HepG2 (cell line): ENCODE measurements at regions of chr6 and their contacts with region 1.

Region 1: GRCh38 chr6:160137989-160138835 is 16.6 kb downstream of the SLC22A1 start:
- DNase-seq: peak; percentile 57
- ATAC-seq: peak; percentile 9
- H3K4me3 ChIP-seq: peak overlapping the region in 1 of 3 experiments; percentile 40; a peak in 1 of 6 replicates
- H3K27ac ChIP-seq: peak overlapping the region; percentile 60
- H3K4me1 ChIP-seq: peaks cover 66% of the 10 kb centered on the region
- H3K27me3 ChIP-seq: no peaks in the 10 kb centered on the region
- CTCF ChIP-seq: peak; percentile 82
- EP300 ChIP-seq: no peak
- POLR2A ChIP-seq: no peak
- RAD21 ChIP-seq: peak; percentile 68

Region 2: DNA sequence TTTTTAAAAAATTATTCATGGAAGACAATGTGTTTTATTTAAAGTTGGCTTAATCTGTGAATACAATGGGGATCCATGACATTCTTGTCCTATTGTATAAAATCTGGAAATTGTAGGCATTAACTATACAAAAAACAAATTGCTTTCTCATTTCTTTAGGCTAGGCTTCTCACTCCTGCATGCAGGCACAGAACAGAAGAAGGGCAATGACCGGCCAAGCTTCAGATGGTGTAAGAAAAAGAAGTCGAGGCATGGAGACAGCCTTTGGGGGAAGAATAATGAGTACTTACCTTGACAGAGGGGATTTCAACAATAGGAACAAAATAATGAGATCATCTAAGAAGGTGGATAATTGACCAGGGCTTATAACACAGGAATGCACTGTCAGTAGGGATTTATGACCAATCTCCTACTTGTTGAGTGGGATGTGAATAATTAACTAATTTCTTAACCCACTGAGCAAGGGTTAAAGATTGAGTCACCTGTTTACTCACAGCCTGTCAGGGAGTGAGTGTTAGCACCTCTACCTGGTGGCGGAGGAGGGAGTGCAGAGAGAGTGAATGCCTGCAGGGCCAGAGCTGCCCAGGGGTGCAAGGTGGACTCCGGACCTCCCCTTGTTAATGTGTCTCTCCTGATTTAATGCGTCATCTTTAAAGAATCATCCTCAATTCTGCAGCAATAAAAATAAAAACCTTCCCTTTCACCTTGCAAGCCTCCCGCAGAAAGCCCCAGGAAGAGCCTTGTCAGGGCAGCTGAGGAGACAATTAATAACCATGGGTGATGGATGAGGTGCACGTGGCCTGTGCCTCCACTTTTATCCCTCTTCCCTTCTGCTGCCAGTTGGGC is 116.5 kb after region 1 on chr6:
- CTCF ChIA-PET with region 1: interaction called, 3 read pairs
- POLR2A ChIA-PET with region 1: no interaction called
- in situ Hi-C with region 1: no loop called
- intact Hi-C with region 1: loop called (anchors 10 kb)
- DNase-seq: peak; percentile 81
- ATAC-seq: peak; percentile 99
- H3K4me3 ChIP-seq: no peak overlapping the region
- H3K27ac ChIP-seq: peak overlapping the region; percentile 7
- H3K4me1 ChIP-seq: peaks cover 18% of the 10 kb centered on the region
- H3K27me3 ChIP-seq: peaks cover 0 to 12% of the 10 kb centered on the region in 2 experiments; a peak in 1 of 5 replicates
- CTCF ChIP-seq: peak; percentile 62
- EP300 ChIP-seq: peak in 1 of 2 experiments; percentile 61; a peak in 2 of 4 replicates
- POLR2A ChIP-seq: no peak
- RAD21 ChIP-seq: peak; percentile 36; the same call in 1 of the 2 replicates

Region 3: DNA sequence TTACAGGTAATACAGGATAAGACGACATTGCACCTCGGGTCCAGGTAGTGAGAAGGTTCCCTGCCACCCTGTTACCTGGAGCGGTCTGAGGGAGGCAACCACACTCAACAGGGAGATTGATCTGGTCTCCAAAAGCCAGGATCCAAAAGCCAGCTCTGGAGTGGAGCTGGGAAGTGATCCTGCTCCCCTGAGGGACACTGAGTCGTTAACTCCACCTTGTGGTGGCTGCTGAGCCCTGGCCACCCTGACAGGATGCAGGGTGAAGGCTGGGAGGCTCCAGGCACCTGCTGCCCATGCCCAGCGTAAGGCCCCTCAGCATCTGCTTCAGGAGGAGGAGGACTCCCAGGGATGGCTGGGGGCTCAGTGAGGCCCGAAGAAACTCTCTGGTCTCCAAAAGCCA is 159.1 kb after region 1 on chr6:
- CTCF ChIA-PET with region 1: no interaction called
- POLR2A ChIA-PET with region 1: no interaction called
- in situ Hi-C with region 1: no loop called
- intact Hi-C with region 1: loop called (anchors 1 kb)
- DNase-seq: peak; percentile 14
- ATAC-seq: peak; percentile 92
- H3K4me3 ChIP-seq: no peak overlapping the region
- H3K27ac ChIP-seq: no peak overlapping the region
- H3K4me1 ChIP-seq: peaks cover 14% of the 10 kb centered on the region
- H3K27me3 ChIP-seq: no peaks in the 10 kb centered on the region
- CTCF ChIP-seq: peak; percentile 77
- EP300 ChIP-seq: no peak
- POLR2A ChIP-seq: no peak
- RAD21 ChIP-seq: peak; percentile 37

Region 4: DNA sequence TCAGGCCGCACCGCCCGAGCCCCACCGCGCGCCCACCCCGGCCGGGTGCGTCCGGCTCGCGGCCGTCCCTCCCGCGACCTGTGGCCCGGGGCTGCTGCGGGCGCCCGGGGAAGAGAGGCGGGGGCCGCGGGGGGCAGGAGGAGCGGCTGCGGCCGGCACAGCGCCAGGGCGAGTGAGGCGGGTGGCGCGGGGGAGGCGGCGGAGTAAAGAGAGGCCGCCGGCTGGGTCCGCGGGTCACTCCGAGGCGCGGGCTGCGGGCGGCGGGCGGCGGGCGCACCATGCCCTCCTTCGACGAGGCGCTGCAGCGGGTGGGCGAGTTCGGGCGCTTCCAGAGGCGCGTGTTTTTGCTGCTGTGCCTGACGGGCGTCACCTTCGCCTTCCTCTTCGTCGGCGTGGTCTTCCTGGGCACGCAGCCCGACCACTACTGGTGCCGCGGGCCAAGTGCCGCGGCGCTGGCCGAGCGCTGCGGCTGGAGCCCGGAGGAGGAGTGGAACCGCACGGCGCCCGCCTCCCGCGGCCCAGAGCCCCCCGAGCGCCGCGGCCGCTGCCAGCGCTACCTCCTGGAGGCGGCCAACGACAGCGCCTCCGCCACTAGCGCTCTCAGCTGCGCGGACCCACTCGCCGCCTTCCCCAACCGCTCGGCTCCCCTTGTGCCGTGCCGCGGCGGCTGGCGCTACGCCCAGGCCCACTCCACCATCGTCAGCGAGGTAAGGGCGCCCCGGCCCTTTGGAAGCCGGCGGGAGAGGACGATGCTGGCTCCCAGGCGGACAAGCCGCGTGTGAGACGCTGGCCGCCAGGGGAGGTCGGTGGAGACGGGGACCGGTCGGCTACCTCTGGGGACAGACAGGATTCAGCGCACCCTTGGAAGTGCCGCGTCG is 210.2 kb after region 1 on chr6 and contains the start of gene SLC22A3:
- CTCF ChIA-PET with region 1: no interaction called
- POLR2A ChIA-PET with region 1: no interaction called
- in situ Hi-C with region 1: no loop called
- intact Hi-C with region 1: loop called (anchors 5 kb)
- DNase-seq: no peak
- ATAC-seq: peak; percentile 73
- H3K4me3 ChIP-seq: peak within 1 kb of the TSS; percentile 74 to 86 (median 86)
- H3K27ac ChIP-seq: peak within 1 kb of the TSS; percentile 95
- H3K4me1 ChIP-seq: peaks cover 41% of the 10 kb centered on the region
- H3K27me3 ChIP-seq: peaks cover 0 to 6% of the 10 kb centered on the region in 2 experiments; a peak in 1 of 5 replicates
- CTCF ChIP-seq: peak; percentile 31
- EP300 ChIP-seq: no peak
- POLR2A ChIP-seq: peak in 1 of 2 experiments; percentile 49; a peak in 2 of 4 replicates
- RAD21 ChIP-seq: peak; percentile 4
- total RNA-seq, gene SLC22A3: 20.1 and 31.5 TPM in 2 replicates

Region 5: DNA sequence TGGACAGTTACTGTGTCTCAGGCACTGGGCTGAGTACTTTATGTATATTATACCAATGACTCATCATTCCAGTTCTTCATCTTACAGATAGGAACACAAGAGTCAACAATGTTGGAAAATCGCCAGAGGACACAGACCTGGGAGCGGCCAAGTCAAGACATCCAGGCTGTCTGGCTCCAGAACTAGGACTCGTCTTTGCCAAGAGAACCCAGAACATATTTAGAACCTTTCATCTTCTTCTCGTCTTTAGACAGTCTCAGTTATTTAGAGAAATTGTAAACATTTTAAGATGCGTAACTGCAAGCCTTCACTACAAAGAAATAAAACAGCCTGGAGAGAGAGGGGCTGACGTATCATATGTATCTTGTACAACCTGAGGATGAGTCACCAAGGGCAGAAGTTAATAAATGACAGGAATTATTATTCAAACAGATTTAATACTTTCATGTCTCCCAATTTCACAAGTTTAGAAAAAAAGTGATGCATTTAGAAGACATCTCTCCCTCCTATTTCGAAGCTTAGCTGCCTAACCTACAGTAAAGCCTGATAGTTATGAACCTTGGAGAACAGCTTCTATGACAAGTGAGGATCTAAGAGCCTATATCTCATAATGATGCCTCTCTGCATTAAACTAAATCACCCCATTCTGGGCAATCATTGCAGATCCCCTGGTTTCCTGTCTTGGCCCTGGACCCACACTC is 253.4 kb after region 1 on chr6:
- CTCF ChIA-PET with region 1: no interaction called
- POLR2A ChIA-PET with region 1: interaction called, 3 read pairs
- in situ Hi-C with region 1: no loop called
- intact Hi-C with region 1: loop called (anchors 5 kb)
- DNase-seq: peak; percentile 73
- ATAC-seq: 0 out of 3 replicates have a peak, but pooled peaks have one; percentile 6
- H3K4me3 ChIP-seq: no peak overlapping the region
- H3K27ac ChIP-seq: peak overlapping the region; percentile 40
- H3K4me1 ChIP-seq: peaks cover 60% of the 10 kb centered on the region
- H3K27me3 ChIP-seq: no peaks in the 10 kb centered on the region
- CTCF ChIP-seq: no peak
- EP300 ChIP-seq: no peak; a peak in 1 of 4 replicates
- POLR2A ChIP-seq: no peak
- RAD21 ChIP-seq: no peak

Region 6: DNA sequence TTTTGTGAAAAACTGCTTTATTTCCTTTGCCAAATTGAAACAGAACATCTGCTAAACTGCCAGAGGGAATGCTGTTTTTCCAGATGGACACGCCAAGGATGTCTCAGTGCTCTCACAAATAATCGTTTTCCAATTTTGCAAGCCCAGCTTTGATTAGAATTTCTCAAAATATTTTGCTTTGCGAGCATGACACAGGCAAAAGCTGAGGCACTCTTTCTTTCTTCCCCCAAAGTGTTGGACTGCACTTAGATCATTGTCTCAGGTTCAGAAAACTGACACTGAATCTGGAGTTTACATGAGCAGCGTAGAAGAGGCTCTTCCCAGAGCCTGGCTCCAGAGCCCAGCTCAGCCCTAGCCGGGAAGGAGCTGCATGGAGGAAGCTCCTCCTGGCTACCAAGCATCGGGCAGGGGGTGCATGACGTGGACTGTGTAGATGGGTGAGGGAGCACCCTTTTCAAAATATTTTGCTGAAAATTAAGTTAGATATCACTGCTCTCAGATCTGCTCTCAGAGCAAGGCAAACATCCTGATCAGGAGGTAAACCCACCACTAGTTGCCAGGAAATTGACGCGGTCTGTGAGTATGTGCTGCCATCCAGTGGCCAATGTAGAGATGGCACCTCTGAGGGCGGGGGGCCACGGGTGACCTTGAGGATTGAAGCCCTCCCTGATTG is 317.5 kb after region 1 on chr6:
- CTCF ChIA-PET with region 1: interaction called, 23 read pairs
- POLR2A ChIA-PET with region 1: interaction called, 3 read pairs
- in situ Hi-C with region 1: loop called (anchors 5 kb)
- intact Hi-C with region 1: loop called (anchors 1 kb)
- DNase-seq: peak; percentile 62
- ATAC-seq: peak; percentile 86
- H3K4me3 ChIP-seq: no peak overlapping the region
- H3K27ac ChIP-seq: no peak overlapping the region
- H3K4me1 ChIP-seq: peaks cover 8% of the 10 kb centered on the region
- H3K27me3 ChIP-seq: no peaks in the 10 kb centered on the region
- CTCF ChIP-seq: peak; percentile 100
- EP300 ChIP-seq: no peak
- POLR2A ChIP-seq: no peak
- RAD21 ChIP-seq: peak; percentile 97

Region 7: GRCh38 chr6:160534050-160534696 is 396.0 kb after region 1 on chr6:
- CTCF ChIA-PET with region 1: interaction called, 8 read pairs
- POLR2A ChIA-PET with region 1: no interaction called
- in situ Hi-C with region 1: no loop called
- intact Hi-C with region 1: loop called (anchors 1 kb)
- DNase-seq: peak; percentile 52
- ATAC-seq: peak; percentile 96
- H3K4me3 ChIP-seq: no peak overlapping the region
- H3K27ac ChIP-seq: no peak overlapping the region
- H3K4me1 ChIP-seq: peaks cover 4% of the 10 kb centered on the region; the same call in 1 of the 2 replicates
- H3K27me3 ChIP-seq: no peaks in the 10 kb centered on the region
- CTCF ChIP-seq: peak; percentile 97
- EP300 ChIP-seq: no peak
- POLR2A ChIP-seq: no peak
- RAD21 ChIP-seq: peak; percentile 89